HCT116 (cell line): ENCODE measurements at regions of chr9 and their contacts with region 1.

Region 1: DNA sequence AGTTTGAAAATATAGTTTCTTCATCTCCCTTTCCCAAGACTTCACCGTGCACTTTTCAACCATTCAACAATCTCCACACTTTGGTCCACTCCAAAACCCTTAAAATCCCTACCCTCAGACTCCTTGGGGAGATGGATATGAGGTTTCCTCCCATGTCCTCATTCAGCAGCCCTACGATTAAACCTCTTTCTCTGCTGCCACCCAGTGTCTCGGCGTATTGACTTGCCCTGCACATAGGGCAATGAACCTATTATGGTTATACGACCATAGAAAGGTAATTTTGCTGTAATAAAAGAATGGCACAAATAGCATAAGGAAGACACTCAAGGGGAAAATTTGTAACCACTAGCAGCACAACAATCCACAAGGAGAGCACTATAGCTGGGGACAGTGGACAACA is 803.5 kb downstream of the TLE1 start:
- DNase-seq: no peak
- ATAC-seq: no peak
- H3K4me3 ChIP-seq: no peak overlapping the region
- H3K27ac ChIP-seq: no peak overlapping the region
- H3K4me1 ChIP-seq: no peaks in the 10 kb centered on the region
- H3K27me3 ChIP-seq: no peaks in the 10 kb centered on the region
- CTCF ChIP-seq: no peak
- POLR2A ChIP-seq: no peak
- RAD21 ChIP-seq: peak; percentile 14; the same call in 1 of the 2 replicates

Region 2: DNA sequence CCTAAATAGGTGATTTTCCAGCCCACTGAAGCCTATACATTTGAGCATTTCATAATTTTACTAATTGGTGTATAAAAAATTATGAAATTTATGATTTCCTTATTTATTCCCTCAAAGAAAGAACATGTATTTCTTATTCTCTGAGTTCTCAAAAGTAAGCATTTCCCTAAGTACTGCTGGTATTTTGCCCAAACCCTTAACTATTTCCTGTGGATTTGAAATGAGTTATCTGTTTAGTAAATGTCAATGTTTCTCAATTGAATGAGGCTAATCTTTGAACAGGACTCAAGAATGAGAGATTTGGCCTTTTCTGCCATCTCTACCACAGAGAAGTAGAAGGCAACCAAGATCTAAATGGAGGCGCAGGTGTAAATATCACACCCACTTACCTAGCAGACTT is 51.8 kb after region 1 on chr9:
- CTCF ChIA-PET with region 1: no interaction called
- POLR2A ChIA-PET with region 1: no interaction called
- RAD21 ChIA-PET with region 1: no interaction called
- intact Hi-C with region 1: loop called (anchors 5 kb)
- DNase-seq: no peak
- ATAC-seq: no peak
- H3K4me3 ChIP-seq: no peak overlapping the region
- H3K27ac ChIP-seq: no peak overlapping the region
- H3K4me1 ChIP-seq: no peaks in the 10 kb centered on the region
- H3K27me3 ChIP-seq: no peaks in the 10 kb centered on the region
- CTCF ChIP-seq: no peak
- POLR2A ChIP-seq: no peak
- RAD21 ChIP-seq: no peak

Region 3: DNA sequence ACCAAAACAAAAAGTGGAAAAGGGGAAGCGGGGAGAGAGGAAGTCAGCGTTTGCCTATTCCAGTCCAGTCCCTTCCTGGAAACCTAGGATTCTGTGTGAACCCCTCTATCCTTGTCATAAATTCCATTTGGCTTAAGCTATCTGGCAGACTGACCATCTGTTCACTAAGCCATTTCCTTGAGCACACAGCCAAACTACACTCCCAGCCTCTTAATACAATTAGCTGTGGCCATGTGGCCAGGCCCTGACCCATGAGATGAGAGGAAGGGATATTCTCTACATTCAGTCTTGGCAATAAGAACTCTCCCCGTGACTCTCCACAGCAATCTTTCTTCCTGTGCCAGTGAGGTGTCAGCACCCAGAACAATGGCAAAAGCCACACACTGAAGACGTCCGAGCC is 378.6 kb after region 1 on chr9:
- CTCF ChIA-PET with region 1: no interaction called
- POLR2A ChIA-PET with region 1: no interaction called
- RAD21 ChIA-PET with region 1: no interaction called
- intact Hi-C with region 1: no loop called
- DNase-seq: no peak
- ATAC-seq: no peak
- H3K4me3 ChIP-seq: no peak overlapping the region
- H3K27ac ChIP-seq: no peak overlapping the region
- H3K4me1 ChIP-seq: no peaks in the 10 kb centered on the region
- H3K27me3 ChIP-seq: no peaks in the 10 kb centered on the region
- CTCF ChIP-seq: no peak
- POLR2A ChIP-seq: no peak
- RAD21 ChIP-seq: no peak